B cell (primary cell): ENCODE measurements at regions of chr2 and their contacts with region 1.

Region 1: GRCh38 chr2:172131713-172132555 is 29.2 kb upstream of the DLX2 start:
- DNase-seq: no peak
- ATAC-seq: no peak
- H3K4me3 ChIP-seq: no peak overlapping the region
- H3K4me3 Mint-ChIP-seq: no peak overlapping the region
- H3K27ac ChIP-seq: no peak overlapping the region
- H3K27ac Mint-ChIP-seq: no peak overlapping the region
- H3K4me1 ChIP-seq: no peaks in the 10 kb centered on the region
- H3K4me1 Mint-ChIP-seq: no peaks in the 10 kb centered on the region
- H3K27me3 ChIP-seq: no peaks in the 10 kb centered on the region
- H3K27me3 Mint-ChIP-seq: peaks cover 15% of the 10 kb centered on the region
- CTCF ChIP-seq: no peak

Region 2: GRCh38 chr2:171574149-171574795 is 557.7 kb before region 1 on chr2:
- CTCF ChIA-PET with region 1: interaction called, 3 read pairs
- POLR2A ChIA-PET with region 1: no interaction called
- intact Hi-C with region 1: loop called (anchors 1 kb)
- DNase-seq: peak; percentile 87
- ATAC-seq: peak; percentile 100
- H3K4me3 ChIP-seq: peak overlapping the region in 1 of 5 experiments; percentile 5
- H3K4me3 Mint-ChIP-seq: peak overlapping the region; percentile 37
- H3K27ac ChIP-seq: no peak overlapping the region
- H3K27ac Mint-ChIP-seq: no peak overlapping the region
- H3K4me1 ChIP-seq: peaks cover 0 to 4% of the 10 kb centered on the region in 2 donors
- H3K4me1 Mint-ChIP-seq: peaks cover 6% of the 10 kb centered on the region
- H3K27me3 ChIP-seq: no peaks in the 10 kb centered on the region
- H3K27me3 Mint-ChIP-seq: peaks cover 8% of the 10 kb centered on the region
- CTCF ChIP-seq: peak; percentile 97

Region 3: GRCh38 chr2:171703574-171704347 is 428.2 kb before region 1 on chr2:
- CTCF ChIA-PET with region 1: interaction called, 18 read pairs
- POLR2A ChIA-PET with region 1: no interaction called
- intact Hi-C with region 1: loop called (anchors 2 kb)
- DNase-seq: peak; percentile 52
- ATAC-seq: no peak
- H3K4me3 ChIP-seq: no peak overlapping the region
- H3K4me3 Mint-ChIP-seq: no peak overlapping the region
- H3K27ac ChIP-seq: no peak overlapping the region
- H3K27ac Mint-ChIP-seq: peak overlapping the region; percentile 81
- H3K4me1 ChIP-seq: peaks cover 7 to 8% of the 10 kb centered on the region in 2 donors
- H3K4me1 Mint-ChIP-seq: peaks cover 10% of the 10 kb centered on the region
- H3K27me3 ChIP-seq: no peaks in the 10 kb centered on the region
- H3K27me3 Mint-ChIP-seq: no peaks in the 10 kb centered on the region
- CTCF ChIP-seq: peak; percentile 71

Region 4: DNA sequence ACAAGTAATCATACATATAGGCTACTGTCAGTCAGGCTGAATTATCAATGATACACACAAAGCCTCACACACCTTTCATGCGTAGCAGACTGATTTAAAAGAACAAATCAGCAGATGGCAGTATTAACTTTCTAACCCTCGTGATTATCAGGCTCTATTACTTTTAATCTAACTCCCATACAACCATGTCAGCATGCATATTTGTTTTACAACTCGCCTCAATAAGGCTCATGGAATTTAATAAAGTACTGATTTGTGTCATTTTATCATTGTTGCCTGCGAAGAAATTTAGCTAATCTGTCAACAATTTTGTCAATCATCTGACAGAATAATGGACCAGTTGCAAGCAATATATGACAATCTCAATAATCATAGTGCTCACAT is 320.7 kb before region 1 on chr2:
- CTCF ChIA-PET with region 1: no interaction called
- POLR2A ChIA-PET with region 1: no interaction called
- intact Hi-C with region 1: loop called (anchors 5 kb)
- DNase-seq: peak; percentile 10
- ATAC-seq: no peak
- H3K4me3 ChIP-seq: no peak overlapping the region
- H3K4me3 Mint-ChIP-seq: no peak overlapping the region
- H3K27ac ChIP-seq: no peak overlapping the region
- H3K27ac Mint-ChIP-seq: no peak overlapping the region
- H3K4me1 ChIP-seq: no peaks in the 10 kb centered on the region
- H3K4me1 Mint-ChIP-seq: no peaks in the 10 kb centered on the region
- H3K27me3 ChIP-seq: no peaks in the 10 kb centered on the region
- H3K27me3 Mint-ChIP-seq: no peaks in the 10 kb centered on the region
- CTCF ChIP-seq: no peak